ENCODE measurements at regions of chr20 and their contacts with region 1.

Region 1: GRCh38 chr20:25237610-25238318 is 10.1 kb upstream of the PYGB start:
- DNase-seq: peak; percentile 100
- ATAC-seq: peak; percentile 72
- H3K4me3 ChIP-seq: peak overlapping the region; percentile 27; the same call in 1 of the 2 replicates
- H3K27ac ChIP-seq: peak overlapping the region; percentile 97
- H3K4me1 ChIP-seq: peaks cover 72% of the 10 kb centered on the region
- H3K27me3 ChIP-seq: no peaks in the 10 kb centered on the region
- CTCF ChIP-seq: no peak

Region 2: DNA sequence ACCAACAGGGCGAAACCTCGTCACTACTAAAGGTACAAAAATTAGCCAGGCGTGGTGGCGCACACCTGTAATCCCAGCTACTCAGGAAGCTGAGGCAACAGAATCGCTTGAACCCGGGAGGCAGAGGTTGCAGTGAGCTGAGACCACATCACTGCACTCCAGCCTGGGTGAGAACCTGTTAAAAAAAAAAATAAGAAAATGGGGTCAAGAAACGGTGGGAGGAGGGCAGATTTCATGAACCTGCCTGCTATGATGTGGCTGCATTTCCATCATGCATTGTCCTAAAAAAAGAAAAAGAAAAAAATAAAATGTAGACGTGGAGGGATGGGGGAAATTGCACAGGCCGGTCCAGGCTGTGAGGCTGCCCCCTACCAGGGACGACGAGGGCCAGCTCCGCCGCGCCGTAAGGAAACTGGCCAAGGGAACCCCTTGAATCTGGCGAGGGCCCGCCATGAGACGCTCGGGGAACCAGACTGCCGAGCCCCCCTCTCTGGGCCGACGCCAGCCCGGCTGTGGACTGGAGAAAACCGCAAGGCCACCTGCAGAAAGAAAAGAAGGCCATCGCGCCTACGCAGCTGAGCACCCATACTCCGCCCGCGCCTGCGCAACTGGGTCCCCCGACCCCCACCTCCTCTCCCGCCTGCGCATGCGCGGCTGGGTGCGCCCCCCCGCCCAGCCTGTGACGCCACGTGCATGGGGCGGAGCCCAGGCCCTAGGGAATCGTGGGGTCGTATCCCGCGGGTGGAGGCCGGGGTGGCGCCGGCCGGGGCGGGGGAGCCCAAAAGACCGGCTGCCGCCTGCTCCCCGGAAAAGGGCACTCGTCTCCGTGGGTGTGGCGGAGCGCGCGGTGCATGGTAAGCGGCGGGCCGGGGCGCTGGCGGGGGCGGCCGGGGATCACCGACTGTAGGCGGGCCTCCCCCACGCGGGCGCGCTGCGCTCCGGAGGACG is 42.5 kb before region 1 on chr20 and contains the start of gene ENTPD6:
- CTCF ChIA-PET with region 1: no interaction called
- POLR2A ChIA-PET with region 1: no interaction called
- intact Hi-C with region 1: loop called (anchors 5 kb)
- DNase-seq: peak; percentile 93
- ATAC-seq: peak; percentile 67
- H3K4me3 ChIP-seq: peak within 1 kb of the TSS; percentile 86
- H3K27ac ChIP-seq: peak within 1 kb of the TSS; percentile 76
- H3K4me1 ChIP-seq: peaks cover 37% of the 10 kb centered on the region
- H3K27me3 ChIP-seq: no peaks in the 10 kb centered on the region
- CTCF ChIP-seq: peak; percentile 41; the same call in 1 of the 2 replicates
- total RNA-seq, gene ENTPD6: 122 and 150 TPM in 2 replicates

Region 3: GRCh38 chr20:25223179-25223661 is 14.5 kb before region 1 on chr20:
- CTCF ChIA-PET with region 1: interaction called, 14 read pairs
- POLR2A ChIA-PET with region 1: interaction called, 4 read pairs
- intact Hi-C with region 1: no loop called
- DNase-seq: peak; percentile 99
- ATAC-seq: peak; percentile 94
- H3K4me3 ChIP-seq: no peak overlapping the region
- H3K27ac ChIP-seq: peak overlapping the region; percentile 95
- H3K4me1 ChIP-seq: peaks cover 38% of the 10 kb centered on the region
- H3K27me3 ChIP-seq: no peaks in the 10 kb centered on the region
- CTCF ChIP-seq: peak; percentile 73

Measured in PC-3 (cell line).